ENCODE measurements at regions of chr2 and their contacts with region 1.

Region 1: DNA sequence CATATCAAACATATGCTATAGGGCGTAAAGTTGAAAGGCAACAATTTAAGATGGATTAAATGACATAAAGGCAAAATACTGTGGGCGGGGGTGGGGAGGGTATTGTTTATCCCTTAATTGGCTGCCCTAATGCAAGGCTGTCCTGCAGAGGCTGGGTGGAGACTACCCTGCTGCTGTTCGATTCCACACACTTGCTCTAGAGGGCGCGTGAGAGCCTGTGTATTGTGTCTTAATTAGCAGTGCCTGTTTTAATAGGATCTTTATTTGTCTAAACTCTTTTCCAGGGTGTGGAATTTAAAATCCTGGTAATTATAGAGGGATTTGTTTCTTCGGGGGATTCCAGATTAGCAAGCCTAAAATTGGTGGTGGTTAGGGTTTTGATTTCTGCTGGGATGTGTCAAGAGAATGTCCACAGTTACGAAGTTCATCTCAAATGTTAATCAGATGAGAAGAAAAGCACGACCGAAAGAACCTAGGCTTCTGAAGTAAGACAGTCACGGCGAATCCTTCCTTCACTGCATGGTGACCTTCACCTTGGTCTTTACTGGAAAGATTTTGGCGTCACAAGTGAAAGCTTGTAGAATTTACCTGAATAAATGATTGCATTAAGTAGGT is 103.5 kb upstream of the MAP3K20 start:
- DNase-seq: peak; percentile 54
- H3K4me3 ChIP-seq: no peak overlapping the region
- H3K27ac ChIP-seq: no peak overlapping the region
- H3K4me1 ChIP-seq: peaks cover 38% of the 10 kb centered on the region
- H3K27me3 ChIP-seq: no peaks in the 10 kb centered on the region
- CTCF ChIP-seq: peak; percentile 74 to 80
- POLR2A ChIP-seq: no peak

Region 2: GRCh38 chr2:172813314-172813888 is 158.7 kb before region 1 on chr2:
- CTCF ChIA-PET with region 1: interaction called, 15 read pairs
- POLR2A ChIA-PET with region 1: no interaction called
- dilution Hi-C with region 1: no loop called
- intact Hi-C with region 1: no loop called
- DNase-seq: peak; percentile 68
- H3K4me3 ChIP-seq: no peak overlapping the region
- H3K27ac ChIP-seq: no peak overlapping the region
- H3K4me1 ChIP-seq: no peaks in the 10 kb centered on the region
- H3K27me3 ChIP-seq: peaks cover 0 to 2% of the 10 kb centered on the region in 2 experiments
- CTCF ChIP-seq: peak in 1 of 2 donors; percentile 37
- POLR2A ChIP-seq: no peak

Region 3: GRCh38 chr2:172836386-172836821 is 135.7 kb before region 1 on chr2:
- CTCF ChIA-PET with region 1: no interaction called
- POLR2A ChIA-PET with region 1: no interaction called
- dilution Hi-C with region 1: no loop called
- intact Hi-C with region 1: loop called (anchors 1 kb)
- DNase-seq: peak; percentile 88
- H3K4me3 ChIP-seq: no peak overlapping the region
- H3K27ac ChIP-seq: peak overlapping the region; percentile 67
- H3K4me1 ChIP-seq: peaks cover 28% of the 10 kb centered on the region
- H3K27me3 ChIP-seq: no peaks in the 10 kb centered on the region
- CTCF ChIP-seq: no peak
- POLR2A ChIP-seq: no peak

Region 4: GRCh38 chr2:172985139-172985901 is 13.2 kb after region 1 on chr2:
- CTCF ChIA-PET with region 1: interaction called, 30 read pairs
- POLR2A ChIA-PET with region 1: no interaction called
- dilution Hi-C with region 1: no loop called
- intact Hi-C with region 1: no loop called
- DNase-seq: peak; percentile 58
- H3K4me3 ChIP-seq: no peak overlapping the region
- H3K27ac ChIP-seq: peak overlapping the region; percentile 0
- H3K4me1 ChIP-seq: peaks cover 12% of the 10 kb centered on the region
- H3K27me3 ChIP-seq: no peaks in the 10 kb centered on the region
- CTCF ChIP-seq: no peak
- POLR2A ChIP-seq: no peak

Region 5: DNA sequence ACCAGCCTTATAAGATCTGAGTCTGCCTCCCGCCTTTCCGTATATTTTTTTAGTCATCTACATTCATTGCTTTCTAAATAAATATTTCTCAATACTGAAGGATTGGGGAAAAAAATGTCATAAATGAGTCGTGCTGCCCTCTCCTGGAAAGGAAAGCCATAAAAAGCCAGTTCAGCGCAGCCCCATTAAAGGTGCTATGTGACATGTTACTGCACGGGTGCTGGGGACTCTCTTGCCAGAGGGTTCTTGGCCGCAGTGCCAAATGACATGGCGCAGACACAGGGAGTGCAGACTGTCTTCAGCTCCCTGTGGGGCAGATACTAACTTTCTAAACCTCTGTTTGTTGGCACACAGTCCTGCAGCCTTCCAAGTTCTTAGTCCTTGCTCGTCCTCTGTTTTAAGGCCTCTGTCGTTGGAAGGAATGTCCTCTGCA is 49.8 kb after region 1 on chr2:
- CTCF ChIA-PET with region 1: interaction called, 13 read pairs
- POLR2A ChIA-PET with region 1: no interaction called
- dilution Hi-C with region 1: no loop called
- intact Hi-C with region 1: loop called (anchors 1 kb)
- DNase-seq: peak; percentile 18
- H3K4me3 ChIP-seq: no peak overlapping the region
- H3K27ac ChIP-seq: no peak overlapping the region
- H3K4me1 ChIP-seq: no peaks in the 10 kb centered on the region
- H3K27me3 ChIP-seq: peaks cover 0 to 2% of the 10 kb centered on the region in 2 experiments
- CTCF ChIP-seq: peak; percentile 8 to 23
- POLR2A ChIP-seq: no peak

Region 6: DNA sequence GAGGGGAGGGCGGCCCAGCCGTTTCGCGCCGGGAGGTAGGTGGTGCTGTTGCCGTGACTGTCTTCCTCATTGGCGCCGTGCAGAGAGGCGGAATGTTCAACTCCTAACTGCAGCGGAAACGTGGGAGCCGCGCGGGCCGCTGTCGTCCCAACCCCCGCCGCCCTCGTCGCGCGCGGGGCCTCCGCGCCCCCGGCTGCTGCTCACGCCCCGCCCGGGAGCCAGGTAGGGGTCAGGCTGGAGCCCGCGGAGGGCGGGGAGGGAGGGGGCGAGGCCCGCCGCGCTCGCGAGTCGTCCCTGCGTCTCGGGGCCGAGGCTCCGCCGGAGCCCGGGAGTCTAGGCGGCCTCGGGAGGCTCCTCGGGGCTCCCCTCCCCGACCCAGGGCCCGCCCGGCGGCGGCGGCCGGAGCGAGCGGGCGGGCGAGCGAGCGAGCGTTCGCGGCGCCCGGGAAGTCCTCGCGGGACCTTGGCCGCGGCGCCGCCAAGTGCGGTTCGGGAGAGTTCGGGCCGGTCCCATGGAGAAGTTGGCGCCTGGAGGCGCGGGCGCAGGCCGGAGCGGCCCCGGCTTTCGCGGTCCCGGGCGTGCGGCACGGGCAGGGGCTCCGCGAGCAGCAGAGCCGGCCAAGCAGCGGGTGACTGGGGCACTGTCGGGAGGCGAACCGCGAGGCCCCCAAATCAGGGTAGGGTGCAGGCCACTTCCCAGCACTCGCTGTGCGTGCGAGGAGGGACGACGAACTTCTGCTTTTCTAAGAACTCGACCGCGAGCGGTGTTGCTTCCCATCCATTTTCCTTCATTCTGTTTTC is 103.9 kb after region 1 on chr2 and contains the start of gene MAP3K20:
- CTCF ChIA-PET with region 1: no interaction called
- POLR2A ChIA-PET with region 1: no interaction called
- dilution Hi-C with region 1: no loop called
- intact Hi-C with region 1: loop called (anchors 5 kb)
- DNase-seq: peak; percentile 70
- H3K4me3 ChIP-seq: peak within 1 kb of the TSS; percentile 54 to 86 (median 56)
- H3K27ac ChIP-seq: peak within 1 kb of the TSS; percentile 78
- H3K4me1 ChIP-seq: peaks cover 15% of the 10 kb centered on the region
- H3K27me3 ChIP-seq: no peaks in the 10 kb centered on the region
- CTCF ChIP-seq: peak; percentile 17 to 48
- POLR2A ChIP-seq: peak; percentile 54
- total RNA-seq, gene MAP3K20: 31.5 and 32.0 TPM in 2 replicates

Measured in endothelial cell of umbilical vein (primary cell).